Endothelial cell of umbilical vein (primary cell): ENCODE measurements at regions of chr11 and their contacts with region 1.

Region 1: DNA sequence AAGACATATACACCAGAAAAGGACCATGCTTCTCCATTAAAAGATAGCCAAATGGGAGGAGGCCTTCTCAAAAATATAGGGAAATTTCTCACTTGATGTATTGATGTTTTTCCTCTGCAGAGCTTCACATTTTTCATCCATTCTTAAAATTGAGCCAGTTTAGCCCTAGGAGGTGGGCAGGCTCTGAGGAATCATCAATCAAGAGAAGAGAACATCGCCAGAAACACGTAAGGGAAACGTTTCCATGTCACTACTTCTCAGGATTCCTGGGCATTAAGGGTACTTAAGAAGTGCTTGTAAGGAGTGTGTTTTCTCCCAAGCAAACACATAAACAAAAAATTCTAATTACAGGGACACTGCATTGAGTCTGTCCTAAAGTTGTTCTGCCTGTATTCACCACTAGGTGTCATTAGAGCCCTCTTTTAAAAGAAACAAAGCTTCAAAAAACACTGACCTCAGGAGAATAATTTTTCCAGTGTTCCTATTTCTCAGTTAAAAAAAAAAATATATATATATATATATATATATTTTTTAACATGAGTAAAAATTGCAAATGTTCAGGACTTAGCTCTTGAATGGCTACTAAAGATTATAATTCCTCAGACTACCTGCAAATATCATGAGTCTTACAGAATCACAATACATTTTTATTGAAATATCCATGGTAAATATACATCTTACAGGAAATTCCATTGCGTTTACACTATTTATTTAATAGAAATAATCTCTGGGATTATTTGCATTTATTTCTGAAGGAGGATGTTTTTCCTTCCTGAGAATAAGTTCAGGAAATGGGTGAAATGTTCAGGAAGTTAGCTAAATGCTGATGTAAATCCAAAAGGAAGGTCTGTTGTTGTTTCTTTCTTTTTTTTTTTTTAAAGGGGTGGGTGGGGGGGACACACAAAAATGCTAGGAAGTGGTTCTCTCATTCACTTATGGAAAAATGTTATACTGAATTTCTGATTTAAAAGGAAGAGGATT is 16.0 kb downstream of the FZD4 start:
- DNase-seq: peak; percentile 85
- H3K4me3 ChIP-seq: peak overlapping the region in 1 of 3 experiments; percentile 25
- H3K27ac ChIP-seq: peak overlapping the region; percentile 89
- H3K4me1 ChIP-seq: peaks cover 73% of the 10 kb centered on the region
- H3K27me3 ChIP-seq: no peaks in the 10 kb centered on the region
- CTCF ChIP-seq: peak; percentile 41 to 49
- POLR2A ChIP-seq: peak; percentile 1

Region 2: GRCh38 chr11:86735462-86736302 is 203.5 kb before region 1 on chr11:
- CTCF ChIA-PET with region 1: no interaction called
- POLR2A ChIA-PET with region 1: no interaction called
- dilution Hi-C with region 1: no loop called
- intact Hi-C with region 1: loop called (anchors 5 kb)
- DNase-seq: peak; percentile 78
- H3K4me3 ChIP-seq: no peak overlapping the region
- H3K27ac ChIP-seq: peak overlapping the region; percentile 93
- H3K4me1 ChIP-seq: peaks cover 55% of the 10 kb centered on the region
- H3K27me3 ChIP-seq: no peaks in the 10 kb centered on the region
- CTCF ChIP-seq: no peak
- POLR2A ChIP-seq: peak; percentile 39

Region 3: GRCh38 chr11:86802601-86803051 is 136.6 kb before region 1 on chr11:
- CTCF ChIA-PET with region 1: no interaction called
- POLR2A ChIA-PET with region 1: no interaction called
- dilution Hi-C with region 1: no loop called
- intact Hi-C with region 1: no loop called
- DNase-seq: peak; percentile 80
- H3K4me3 ChIP-seq: peak overlapping the region; percentile 82 to 96 (median 95)
- H3K27ac ChIP-seq: peak overlapping the region; percentile 96
- H3K4me1 ChIP-seq: peaks cover 63% of the 10 kb centered on the region
- H3K27me3 ChIP-seq: no peaks in the 10 kb centered on the region
- CTCF ChIP-seq: peak; percentile 57 to 60
- POLR2A ChIP-seq: no peak

Region 4: GRCh38 chr11:86848861-86849260 is 90.3 kb before region 1 on chr11:
- CTCF ChIA-PET with region 1: no interaction called
- POLR2A ChIA-PET with region 1: no interaction called
- dilution Hi-C with region 1: no loop called
- intact Hi-C with region 1: no loop called
- DNase-seq: no peak
- H3K4me3 ChIP-seq: no peak overlapping the region
- H3K27ac ChIP-seq: no peak overlapping the region
- H3K4me1 ChIP-seq: no peaks in the 10 kb centered on the region
- H3K27me3 ChIP-seq: no peaks in the 10 kb centered on the region
- CTCF ChIP-seq: no peak
- POLR2A ChIP-seq: no peak

Region 5: DNA sequence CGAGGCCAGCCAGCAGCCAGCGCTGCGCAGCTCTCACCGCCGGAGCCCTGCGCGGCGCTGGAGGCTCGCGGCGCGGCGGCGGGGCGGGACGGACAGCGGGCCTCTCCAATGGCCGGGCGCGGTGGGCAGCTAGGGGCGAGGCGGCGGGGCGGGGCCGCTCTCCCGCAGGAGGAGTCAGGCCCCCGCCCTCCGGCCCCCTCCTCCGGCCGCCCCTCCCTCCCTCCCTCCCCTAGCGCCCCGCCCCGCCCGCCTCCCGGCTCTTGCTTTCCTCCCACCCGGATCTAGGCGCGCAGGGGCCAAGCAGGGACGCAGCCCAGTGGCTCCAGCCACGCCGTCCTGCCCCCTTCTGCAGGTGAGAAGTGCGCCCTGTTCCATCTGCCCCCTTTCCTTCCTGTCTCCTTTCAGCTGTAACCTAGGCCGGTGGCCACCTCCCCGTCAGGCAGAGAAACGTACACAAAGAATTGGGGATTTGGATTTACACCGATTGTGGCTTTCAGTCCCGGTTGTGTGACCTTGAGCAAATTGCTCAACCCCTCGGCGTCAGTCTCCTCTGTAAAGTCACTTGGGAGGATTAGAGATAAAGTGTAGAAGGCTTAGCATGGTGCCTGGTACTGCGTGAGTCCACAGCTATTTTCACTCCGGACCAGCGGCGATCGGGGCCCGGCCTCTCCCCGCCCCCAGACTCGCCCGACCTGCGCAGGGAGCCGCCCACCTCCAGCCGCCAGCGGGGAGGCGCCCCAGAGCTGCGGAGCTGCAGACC is 16.4 kb after region 1 on chr11 and contains the start of gene FZD4:
- CTCF ChIA-PET with region 1: interaction called, 122 read pairs
- POLR2A ChIA-PET with region 1: interaction called, 23 read pairs
- dilution Hi-C with region 1: no loop called
- intact Hi-C with region 1: loop called (anchors 1 kb)
- DNase-seq: peak; percentile 92
- H3K4me3 ChIP-seq: peak within 1 kb of the TSS; percentile 75 to 98 (median 95)
- H3K27ac ChIP-seq: peak within 1 kb of the TSS; percentile 75
- H3K4me1 ChIP-seq: peaks cover 30% of the 10 kb centered on the region
- H3K27me3 ChIP-seq: no peaks in the 10 kb centered on the region
- CTCF ChIP-seq: peak in 1 of 2 donors; percentile 30
- POLR2A ChIP-seq: peak; percentile 99
- total RNA-seq, gene FZD4: 109 and 112 TPM in 2 replicates

Region 6: DNA sequence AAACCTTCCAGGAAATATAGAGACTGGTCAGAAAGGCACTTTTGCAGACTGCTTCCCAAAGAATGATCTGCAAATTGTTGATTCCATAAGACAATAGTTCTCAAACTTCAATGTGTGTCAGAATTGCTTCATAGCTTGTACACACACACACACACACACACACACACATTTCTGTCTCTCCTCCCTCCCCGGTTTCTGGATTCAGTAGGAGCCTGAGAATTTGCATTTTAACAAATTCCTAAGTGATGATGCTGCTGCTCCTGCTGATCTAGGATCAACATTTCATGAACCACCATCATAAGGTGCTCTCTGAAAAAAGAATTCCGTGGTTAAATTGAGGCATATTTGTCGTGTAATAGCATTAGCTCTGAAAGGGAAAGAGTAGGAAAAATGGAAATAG is 51.3 kb after region 1 on chr11:
- CTCF ChIA-PET with region 1: interaction called, 78 read pairs
- POLR2A ChIA-PET with region 1: no interaction called
- dilution Hi-C with region 1: no loop called
- intact Hi-C with region 1: loop called (anchors 1 kb)
- DNase-seq: no peak
- H3K4me3 ChIP-seq: no peak overlapping the region
- H3K27ac ChIP-seq: no peak overlapping the region
- H3K4me1 ChIP-seq: peaks cover 10% of the 10 kb centered on the region
- H3K27me3 ChIP-seq: no peaks in the 10 kb centered on the region
- CTCF ChIP-seq: no peak
- POLR2A ChIP-seq: no peak

Region 7: GRCh38 chr11:87097582-87097981 is 158.4 kb after region 1 on chr11:
- CTCF ChIA-PET with region 1: interaction called, 7 read pairs
- POLR2A ChIA-PET with region 1: no interaction called
- dilution Hi-C with region 1: no loop called
- intact Hi-C with region 1: loop called (anchors 2 kb)
- DNase-seq: peak; percentile 52
- H3K4me3 ChIP-seq: no peak overlapping the region
- H3K27ac ChIP-seq: no peak overlapping the region
- H3K4me1 ChIP-seq: no peaks in the 10 kb centered on the region
- H3K27me3 ChIP-seq: no peaks in the 10 kb centered on the region
- CTCF ChIP-seq: peak; percentile 33 to 65
- POLR2A ChIP-seq: no peak

Region 8: DNA sequence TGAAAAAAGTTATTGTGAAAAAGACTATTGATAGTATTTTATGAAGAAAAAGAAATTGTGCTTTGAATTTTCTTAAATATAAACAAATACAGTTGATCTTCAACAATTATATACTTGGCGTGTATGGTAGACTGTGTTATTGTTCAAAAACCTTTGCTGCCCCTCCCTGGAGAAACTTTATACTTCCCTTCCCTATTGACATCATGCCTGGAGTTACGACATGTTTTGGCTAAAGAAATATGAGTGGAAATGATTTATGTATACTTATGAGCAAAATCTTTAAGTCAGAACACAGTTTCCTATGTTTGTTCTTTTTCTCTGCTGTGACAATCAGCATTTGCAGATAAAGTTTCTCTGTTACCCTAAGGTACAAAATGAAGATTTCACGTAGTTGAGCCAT is 342.3 kb after region 1 on chr11:
- CTCF ChIA-PET with region 1: interaction called, 41 read pairs
- POLR2A ChIA-PET with region 1: no interaction called
- dilution Hi-C with region 1: no loop called
- intact Hi-C with region 1: loop called (anchors 1 kb)
- DNase-seq: peak; percentile 96
- H3K4me3 ChIP-seq: no peak overlapping the region
- H3K27ac ChIP-seq: no peak overlapping the region
- H3K4me1 ChIP-seq: peaks cover 9% of the 10 kb centered on the region
- H3K27me3 ChIP-seq: no peaks in the 10 kb centered on the region
- CTCF ChIP-seq: peak in 1 of 2 donors; percentile 22
- POLR2A ChIP-seq: no peak

Region 9: GRCh38 chr11:87368858-87369480 is 429.8 kb after region 1 on chr11:
- CTCF ChIA-PET with region 1: no interaction called
- POLR2A ChIA-PET with region 1: no interaction called
- dilution Hi-C with region 1: no loop called
- intact Hi-C with region 1: loop called (anchors 5 kb)
- DNase-seq: peak; percentile 97
- H3K4me3 ChIP-seq: peak overlapping the region in 1 of 3 experiments; percentile 5
- H3K27ac ChIP-seq: peak overlapping the region; percentile 94
- H3K4me1 ChIP-seq: peaks cover 47% of the 10 kb centered on the region
- H3K27me3 ChIP-seq: no peaks in the 10 kb centered on the region
- CTCF ChIP-seq: no peak
- POLR2A ChIP-seq: peak; percentile 65